CD8-positive, alpha-beta memory T cell (primary cell): ENCODE measurements at regions of chr2 and their contacts with region 1.

Region 1: GRCh38 chr2:202588647-202589581 is 45.9 kb upstream of the FAM117B start:
- DNase-seq: peak; percentile 39 to 80 (median 66)
- H3K4me3 ChIP-seq: no peak overlapping the region
- H3K4me3 Mint-ChIP-seq: peak overlapping the region in 4 of 7 donors; percentile 19 to 69 (median 30)
- H3K27ac ChIP-seq: no peak overlapping the region
- H3K27ac Mint-ChIP-seq: peak overlapping the region in 1 of 8 donors; percentile 12
- H3K4me1 ChIP-seq: peaks cover 8% of the 10 kb centered on the region
- H3K4me1 Mint-ChIP-seq: peaks cover 4 to 10% (median 7%) of the 10 kb centered on the region in 3 donors
- H3K27me3 ChIP-seq: no peaks in the 10 kb centered on the region
- H3K27me3 Mint-ChIP-seq: no peaks in the 10 kb centered on the region

Region 2: DNA sequence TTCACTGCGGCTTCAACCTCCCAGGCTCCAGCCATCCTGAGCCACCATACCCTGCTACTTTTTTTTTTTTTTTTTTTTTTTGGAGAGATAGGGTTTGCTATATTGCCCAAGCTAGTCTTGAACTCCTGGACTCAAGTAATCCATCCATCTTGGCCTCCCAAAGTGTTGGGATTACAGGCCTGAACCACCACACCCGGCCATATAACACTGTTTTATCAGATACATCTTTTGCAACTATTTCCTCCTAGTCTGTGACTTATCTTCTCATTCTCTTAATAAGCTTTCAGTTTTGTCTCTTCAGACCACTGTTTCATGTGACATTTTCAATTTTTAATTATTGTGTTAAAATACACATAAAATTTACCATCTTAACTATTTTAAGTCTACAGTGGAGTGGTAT is 10.2 kb after region 1 on chr2:
- CTCF ChIA-PET with region 1: interaction called, 10 read pairs
- POLR2A ChIA-PET with region 1: interaction called, 10 read pairs
- DNase-seq: no peak
- H3K4me3 ChIP-seq: no peak overlapping the region
- H3K4me3 Mint-ChIP-seq: no peak overlapping the region
- H3K27ac ChIP-seq: no peak overlapping the region
- H3K27ac Mint-ChIP-seq: no peak overlapping the region
- H3K4me1 ChIP-seq: no peaks in the 10 kb centered on the region
- H3K4me1 Mint-ChIP-seq: peaks cover 0 to 4% (median 0%) of the 10 kb centered on the region in 3 donors
- H3K27me3 ChIP-seq: no peaks in the 10 kb centered on the region
- H3K27me3 Mint-ChIP-seq: no peaks in the 10 kb centered on the region

Region 3: DNA sequence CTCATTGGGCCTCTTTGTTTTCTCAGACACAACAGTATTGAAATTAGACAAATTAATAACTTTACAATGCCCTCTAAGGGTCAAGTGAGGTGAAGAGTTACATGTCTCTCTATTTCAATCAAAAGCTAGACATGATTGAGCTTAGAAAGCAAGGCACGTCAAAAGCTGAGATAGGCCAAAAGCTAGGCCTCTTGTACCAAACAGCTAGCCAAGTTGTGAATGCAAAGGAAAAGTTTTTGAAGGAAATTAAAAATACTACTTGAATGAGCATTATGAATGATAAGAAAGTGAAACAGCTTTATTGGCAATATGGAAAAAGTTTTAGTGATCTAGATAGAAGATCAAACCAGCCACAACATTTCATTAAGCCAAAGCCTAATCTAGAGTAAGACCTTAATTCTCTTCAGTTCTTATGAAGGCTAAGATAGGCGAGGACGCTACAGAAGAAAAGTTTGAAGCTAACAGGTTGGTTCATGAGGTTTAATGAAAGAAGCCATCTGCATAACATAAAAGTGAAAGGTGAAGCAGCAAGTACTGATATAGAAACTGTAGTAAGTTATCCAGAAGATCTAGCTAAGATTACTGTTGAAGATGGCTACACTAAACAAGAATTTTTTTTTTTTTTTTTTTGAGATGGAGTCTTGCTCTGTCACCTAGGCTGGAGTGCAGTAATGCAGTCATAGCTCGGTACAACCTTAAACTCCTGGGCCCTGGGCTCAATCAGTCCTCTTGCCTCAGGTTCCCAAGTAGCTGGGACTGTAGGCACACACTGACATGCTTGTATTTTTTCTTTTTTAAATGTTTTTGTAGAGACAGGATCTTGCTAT is 111.4 kb after region 1 on chr2:
- CTCF ChIA-PET with region 1: interaction called, 25 read pairs
- POLR2A ChIA-PET with region 1: no interaction called
- DNase-seq: no peak
- H3K4me3 ChIP-seq: no peak overlapping the region
- H3K4me3 Mint-ChIP-seq: no peak overlapping the region
- H3K27ac ChIP-seq: no peak overlapping the region
- H3K27ac Mint-ChIP-seq: peak overlapping the region in 4 of 8 donors; percentile 39 to 64 (median 46)
- H3K4me1 ChIP-seq: peaks cover 12% of the 10 kb centered on the region
- H3K4me1 Mint-ChIP-seq: peaks cover 31 to 52% (median 49%) of the 10 kb centered on the region in 3 donors
- H3K27me3 ChIP-seq: no peaks in the 10 kb centered on the region
- H3K27me3 Mint-ChIP-seq: no peaks in the 10 kb centered on the region

Region 4: DNA sequence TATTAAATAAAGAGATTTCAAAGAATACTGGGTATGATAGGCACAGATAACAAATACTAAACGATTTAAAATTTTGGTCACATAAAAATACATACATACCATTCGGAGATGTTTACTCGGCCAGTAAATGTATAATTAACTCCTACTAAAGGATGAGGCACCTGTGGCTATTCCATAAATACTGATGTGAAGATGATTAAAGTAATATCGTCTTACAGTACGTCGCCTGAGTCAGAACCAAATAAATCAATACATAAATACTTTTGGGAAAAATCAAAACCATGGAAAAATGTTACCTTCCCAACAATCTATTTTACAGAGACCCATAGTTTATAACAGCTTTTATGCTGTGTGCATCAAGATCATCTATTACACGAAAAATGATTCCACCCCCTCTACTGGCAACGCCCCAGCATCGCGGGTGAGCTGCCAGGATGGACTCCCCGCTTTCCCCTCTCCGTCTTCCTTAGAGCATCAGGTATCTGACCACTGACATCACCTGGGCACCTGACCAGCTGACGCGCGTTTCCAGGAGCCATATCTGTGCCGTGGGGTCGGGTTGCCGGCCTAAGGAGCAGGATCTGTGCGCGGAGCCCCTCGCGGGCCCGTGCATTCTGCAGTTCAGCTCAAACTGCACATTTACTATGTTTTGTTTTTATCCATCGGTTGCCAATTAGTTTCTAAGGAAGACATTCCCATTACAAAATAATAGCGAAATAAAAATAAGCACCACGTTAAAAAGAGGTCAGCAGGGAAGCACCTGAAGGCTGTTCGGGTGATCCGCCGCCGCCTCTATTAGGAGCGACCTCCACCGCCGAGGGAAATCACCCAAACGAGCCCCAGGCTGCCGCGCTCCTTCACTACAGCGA is 281.8 kb after region 1 on chr2:
- CTCF ChIA-PET with region 1: interaction called, 39 read pairs
- POLR2A ChIA-PET with region 1: no interaction called
- DNase-seq: peak; percentile 31 to 70 (median 37)
- H3K4me3 ChIP-seq: peak overlapping the region; percentile 78
- H3K4me3 Mint-ChIP-seq: peak overlapping the region; percentile 89 to 97 (median 93)
- H3K27ac ChIP-seq: peak overlapping the region; percentile 21
- H3K27ac Mint-ChIP-seq: peak overlapping the region; percentile 5 to 89 (median 70)
- H3K4me1 ChIP-seq: no peaks in the 10 kb centered on the region
- H3K4me1 Mint-ChIP-seq: peaks cover 8 to 14% (median 8%) of the 10 kb centered on the region in 3 donors
- H3K27me3 ChIP-seq: no peaks in the 10 kb centered on the region
- H3K27me3 Mint-ChIP-seq: no peaks in the 10 kb centered on the region